Transverse colon (tissue), 4 donors: ENCODE measurements at regions of chr15 and their contacts with region 1.

Region 1: GRCh38 chr15:92645030-92645756 is 10.4 kb downstream of the FAM174B start:
- DNase-seq: no peak
- H3K4me3 ChIP-seq: no peak overlapping the region
- H3K27ac ChIP-seq: peak overlapping the region in 2 of 4 donors; percentile 26 to 46
- H3K4me1 ChIP-seq: peaks cover 0 to 1% (median 0%) of the 10 kb centered on the region in 4 donors
- H3K27me3 ChIP-seq: no peaks in the 10 kb centered on the region
- CTCF ChIP-seq: no peak
- EP300 ChIP-seq: no peak
- POLR2A ChIP-seq: no peak

Region 2: DNA sequence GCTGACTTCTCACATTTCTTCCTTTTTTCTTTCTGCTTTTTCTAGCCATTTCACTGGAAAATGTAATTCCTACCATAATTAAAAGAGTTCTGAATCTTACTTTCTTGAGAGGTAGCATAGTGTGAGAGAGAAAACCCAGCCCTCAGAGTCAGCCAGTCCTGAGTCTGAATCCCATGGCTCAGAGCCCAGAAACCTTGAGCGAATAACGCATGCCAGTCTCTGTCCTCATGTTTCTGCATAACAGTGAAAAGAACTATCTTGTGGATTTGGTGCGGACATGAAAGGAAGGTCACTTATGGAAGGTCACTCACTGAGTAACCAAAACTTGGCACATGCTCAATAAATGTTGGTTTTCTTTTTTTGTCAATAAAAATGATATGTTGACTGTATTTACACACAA is 820.9 kb before region 1 on chr15:
- in situ Hi-C with region 1: no loop called
- intact Hi-C with region 1: no loop called
- DNase-seq: no peak
- H3K4me3 ChIP-seq: no peak overlapping the region
- H3K27ac ChIP-seq: no peak overlapping the region
- H3K4me1 ChIP-seq: no peaks in the 10 kb centered on the region
- H3K27me3 ChIP-seq: no peaks in the 10 kb centered on the region
- CTCF ChIP-seq: no peak
- EP300 ChIP-seq: no peak
- POLR2A ChIP-seq: no peak

Region 3: DNA sequence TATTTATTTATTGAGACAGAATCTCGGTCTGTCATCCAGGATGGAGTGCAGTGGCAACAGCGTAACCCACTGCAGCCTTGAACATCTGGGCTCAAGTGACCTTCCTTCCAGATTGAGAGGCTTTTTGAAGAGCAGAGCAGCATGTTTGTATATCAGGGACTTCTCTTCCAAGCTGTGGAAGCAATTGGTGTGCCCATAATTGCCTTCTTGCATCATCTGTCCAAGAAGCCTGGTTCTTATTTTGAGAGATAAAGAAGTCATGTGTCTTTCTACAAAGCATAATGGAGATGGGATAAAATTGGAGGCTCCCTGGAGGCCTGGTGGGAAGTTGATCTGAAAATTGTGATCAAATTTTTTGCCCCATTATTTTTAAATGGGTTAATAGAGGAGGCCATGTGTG is 1402.4 kb after region 1 on chr15:
- in situ Hi-C with region 1: no loop called
- intact Hi-C with region 1: loop called (anchors 5 kb)
- DNase-seq: no peak
- H3K4me3 ChIP-seq: no peak overlapping the region
- H3K27ac ChIP-seq: no peak overlapping the region
- H3K4me1 ChIP-seq: no peaks in the 10 kb centered on the region
- H3K27me3 ChIP-seq: no peaks in the 10 kb centered on the region
- CTCF ChIP-seq: no peak
- EP300 ChIP-seq: no peak
- POLR2A ChIP-seq: no peak